Activated B cell treated with CpG ODN at 0.5 μM for 24 hours (primary cell): ENCODE measurements at regions of chr1 and their contacts with region 1.

Region 1: GRCh38 chr1:45410850-45411314 is 70.6 kb upstream of the MUTYH start:
- DNase-seq: no peak
- ATAC-seq: no peak
- H3K4me3 Mint-ChIP-seq: peak overlapping the region; percentile 25
- H3K27ac Mint-ChIP-seq: peak overlapping the region; percentile 75
- H3K4me1 Mint-ChIP-seq: peaks cover 68% of the 10 kb centered on the region
- H3K27me3 Mint-ChIP-seq: no peaks in the 10 kb centered on the region
- CTCF ChIP-seq: no peak

Region 2: GRCh38 chr1:45103534-45103933 is 307.3 kb before region 1 on chr1:
- CTCF ChIA-PET with region 1: no interaction called
- POLR2A ChIA-PET with region 1: no interaction called
- intact Hi-C with region 1: no loop called
- DNase-seq: no peak
- ATAC-seq: no peak
- H3K4me3 Mint-ChIP-seq: no peak overlapping the region
- H3K27ac Mint-ChIP-seq: no peak overlapping the region
- H3K4me1 Mint-ChIP-seq: no peaks in the 10 kb centered on the region
- H3K27me3 Mint-ChIP-seq: peaks cover 8% of the 10 kb centered on the region
- CTCF ChIP-seq: no peak

Region 3: DNA sequence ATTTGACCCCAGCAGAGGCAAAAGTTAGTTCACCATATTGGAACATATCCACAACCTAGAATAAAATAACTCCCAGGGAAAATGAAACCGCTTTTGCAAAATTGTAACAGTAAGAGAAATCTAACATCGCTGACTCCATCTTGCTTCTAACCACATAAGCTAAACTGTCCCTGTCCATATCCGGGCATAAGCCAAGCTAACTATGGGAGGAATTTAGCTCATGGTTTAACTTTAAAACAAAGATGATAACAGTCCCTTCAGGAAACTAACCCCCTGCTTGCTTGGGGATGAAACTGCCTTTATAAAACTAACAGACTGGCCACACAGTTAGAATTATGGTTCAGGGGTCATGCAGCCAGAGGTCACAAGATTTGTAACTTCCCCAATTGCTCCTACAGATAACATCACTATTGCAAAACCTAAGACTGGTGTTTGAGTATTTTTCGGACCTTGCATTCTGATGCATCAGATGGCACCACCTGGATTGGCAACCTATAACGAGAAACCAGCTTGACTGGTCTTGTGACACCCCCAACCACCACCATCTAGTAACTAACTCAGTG is 33.8 kb after region 1 on chr1:
- CTCF ChIA-PET with region 1: no interaction called
- POLR2A ChIA-PET with region 1: no interaction called
- intact Hi-C with region 1: loop called (anchors 5 kb)
- DNase-seq: no peak
- ATAC-seq: no peak
- H3K4me3 Mint-ChIP-seq: no peak overlapping the region
- H3K27ac Mint-ChIP-seq: no peak overlapping the region
- H3K4me1 Mint-ChIP-seq: no peaks in the 10 kb centered on the region
- H3K27me3 Mint-ChIP-seq: no peaks in the 10 kb centered on the region
- CTCF ChIP-seq: no peak

Region 4: GRCh38 chr1:45470306-45470798 is 59.5 kb after region 1 on chr1:
- CTCF ChIA-PET with region 1: no interaction called
- POLR2A ChIA-PET with region 1: no interaction called
- intact Hi-C with region 1: loop called (anchors 1 kb)
- DNase-seq: no peak
- ATAC-seq: peak; percentile 19
- H3K4me3 Mint-ChIP-seq: no peak overlapping the region
- H3K27ac Mint-ChIP-seq: no peak overlapping the region
- H3K4me1 Mint-ChIP-seq: peaks cover 50% of the 10 kb centered on the region
- H3K27me3 Mint-ChIP-seq: no peaks in the 10 kb centered on the region
- CTCF ChIP-seq: no peak

Region 5: DNA sequence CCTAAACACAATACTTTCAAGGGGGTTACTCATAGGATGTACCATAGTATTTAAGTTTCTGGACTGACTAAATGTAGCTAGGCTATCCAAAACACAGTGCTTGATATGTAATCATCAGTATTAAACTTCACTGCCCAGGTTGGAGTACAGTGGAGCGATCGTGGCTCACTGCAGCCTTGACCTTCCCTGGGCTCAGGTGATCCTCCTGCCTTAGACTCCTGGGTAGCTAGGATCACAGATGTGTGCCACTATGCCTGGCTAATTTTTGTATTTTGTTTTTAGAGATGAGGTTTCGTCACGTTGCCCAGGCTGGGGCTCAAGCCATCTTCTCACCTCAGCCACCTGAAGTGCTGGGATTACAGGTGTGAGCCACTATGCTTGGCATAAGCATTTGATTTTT is 183.5 kb after region 1 on chr1:
- CTCF ChIA-PET with region 1: no interaction called
- POLR2A ChIA-PET with region 1: no interaction called
- intact Hi-C with region 1: no loop called
- DNase-seq: no peak
- ATAC-seq: no peak
- H3K4me3 Mint-ChIP-seq: no peak overlapping the region
- H3K27ac Mint-ChIP-seq: no peak overlapping the region
- H3K4me1 Mint-ChIP-seq: peaks cover 17% of the 10 kb centered on the region
- H3K27me3 Mint-ChIP-seq: no peaks in the 10 kb centered on the region
- CTCF ChIP-seq: no peak

Region 6: GRCh38 chr1:45647248-45648021 is 236.6 kb after region 1 on chr1:
- CTCF ChIA-PET with region 1: no interaction called
- POLR2A ChIA-PET with region 1: no interaction called
- intact Hi-C with region 1: no loop called
- DNase-seq: no peak
- ATAC-seq: no peak
- H3K4me3 Mint-ChIP-seq: no peak overlapping the region
- H3K27ac Mint-ChIP-seq: no peak overlapping the region
- H3K4me1 Mint-ChIP-seq: peaks cover 27% of the 10 kb centered on the region
- H3K27me3 Mint-ChIP-seq: no peaks in the 10 kb centered on the region
- CTCF ChIP-seq: no peak